ENCODE measurements at regions of chr1 and their contacts with region 1.

Region 1: DNA sequence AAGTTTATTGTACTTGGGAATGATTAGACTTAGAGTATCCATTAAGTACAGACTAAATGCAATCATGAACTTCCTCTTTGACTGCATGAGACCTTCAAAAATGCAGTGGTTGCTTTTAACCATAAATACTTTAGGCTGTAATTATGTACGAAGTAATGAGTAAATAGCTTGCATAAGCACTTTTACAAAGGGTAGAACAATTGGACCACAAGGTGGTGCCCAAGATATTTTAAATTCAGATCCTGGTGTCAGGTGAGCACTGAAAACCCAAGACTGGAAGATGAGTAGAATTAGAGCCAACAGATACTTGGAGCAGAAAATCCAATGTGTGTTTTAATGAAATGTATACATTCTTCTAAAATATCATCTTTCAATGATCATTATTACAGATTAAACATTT is 43.4 kb upstream of the RHOU start:
- DNase-seq: peak in 6 of 14 experiments; percentile 3 to 73 (median 55)
- ATAC-seq: peak; percentile 51
- H3K4me3 ChIP-seq: no peak overlapping the region
- H3K4me3 Mint-ChIP-seq: no peak overlapping the region
- H3K27ac ChIP-seq: no peak overlapping the region
- H3K27ac Mint-ChIP-seq: no peak overlapping the region
- H3K4me1 ChIP-seq: peaks cover 10% of the 10 kb centered on the region
- H3K4me1 Mint-ChIP-seq: peaks cover 13% of the 10 kb centered on the region
- H3K27me3 ChIP-seq: no peaks in the 10 kb centered on the region
- H3K27me3 Mint-ChIP-seq: no peaks in the 10 kb centered on the region
- CTCF ChIP-seq: peak; percentile 48

Region 2: DNA sequence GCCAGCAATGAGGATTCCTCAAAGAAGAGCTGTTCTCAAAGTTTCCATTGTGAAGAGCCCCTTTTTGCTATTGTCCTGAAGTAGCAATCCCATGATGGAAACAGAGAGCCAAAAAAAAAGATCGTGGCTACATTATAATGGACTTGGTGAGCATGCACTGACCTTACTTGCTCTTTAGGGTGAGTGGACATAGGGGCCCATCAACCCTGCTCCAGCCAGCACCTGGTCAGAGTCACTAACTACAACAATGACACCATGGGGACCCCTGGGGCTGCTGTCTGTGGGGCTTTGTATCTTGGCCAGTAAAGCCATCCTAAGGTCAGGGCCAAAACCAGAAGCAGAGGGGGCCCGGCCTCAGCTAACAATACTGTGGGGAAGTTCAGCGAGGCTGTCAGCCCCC is 548.6 kb after region 1 on chr1:
- CTCF ChIA-PET with region 1: no interaction called
- POLR2A ChIA-PET with region 1: no interaction called
- intact Hi-C with region 1: loop called in 1 of 2 experiments (anchors 5 kb)
- DNase-seq: no peak
- ATAC-seq: no peak
- H3K4me3 ChIP-seq: no peak overlapping the region
- H3K4me3 Mint-ChIP-seq: no peak overlapping the region
- H3K27ac ChIP-seq: no peak overlapping the region
- H3K27ac Mint-ChIP-seq: no peak overlapping the region
- H3K4me1 ChIP-seq: no peaks in the 10 kb centered on the region
- H3K4me1 Mint-ChIP-seq: no peaks in the 10 kb centered on the region
- H3K27me3 ChIP-seq: no peaks in the 10 kb centered on the region
- H3K27me3 Mint-ChIP-seq: no peaks in the 10 kb centered on the region
- CTCF ChIP-seq: no peak